ENCODE measurements at regions of chr2 and their contacts with region 1.

Region 1: DNA sequence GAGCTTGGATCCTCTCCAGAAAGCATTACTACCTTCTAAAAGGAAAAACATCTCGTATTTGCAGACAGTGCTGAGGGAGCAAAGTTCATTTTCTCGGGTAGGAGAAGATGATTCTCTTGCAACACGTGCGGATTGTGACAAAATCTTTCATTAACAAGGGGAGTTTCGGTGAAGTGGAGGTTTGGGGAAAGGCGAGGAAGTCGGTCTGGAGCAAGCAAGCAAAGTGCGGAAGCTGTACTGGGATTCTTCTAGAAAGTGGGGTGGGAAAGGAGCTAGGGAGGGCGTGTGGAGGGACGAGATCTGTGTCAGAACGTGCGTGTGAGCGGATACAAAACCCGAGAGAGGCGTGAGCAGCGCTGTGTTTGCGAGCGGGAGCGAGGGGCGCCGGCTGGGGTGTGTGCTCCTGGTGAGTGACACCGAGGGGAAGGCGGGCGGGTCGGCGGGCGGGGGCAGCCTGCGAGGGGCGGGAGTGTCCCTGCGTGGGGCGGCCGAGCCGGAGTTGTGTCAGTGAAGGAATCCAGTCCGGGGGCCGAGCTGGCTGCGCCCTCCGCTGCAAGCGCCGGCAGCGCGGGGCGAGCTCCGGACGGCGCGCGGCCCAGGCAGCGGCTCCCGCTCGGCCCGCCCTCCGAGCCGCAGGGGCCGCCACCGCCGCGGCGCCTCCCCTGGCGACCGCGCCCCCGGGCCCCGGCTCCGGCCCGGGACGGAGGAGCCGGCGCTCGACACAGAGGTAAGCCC is at the start of gene SPATS2L:
- DNase-seq: peak; percentile 85
- ATAC-seq: peak; percentile 83 to 89
- total RNA-seq, gene SPATS2L: 95.7 to 117 TPM

Region 2: GRCh38 chr2:199985625-199986207 is 320.6 kb before region 1 on chr2:
- intact Hi-C with region 1: loop called in 1 of 2 experiments (anchors 5 kb)
- DNase-seq: peak; percentile 46
- ATAC-seq: peak; percentile 69 to 70

Region 3: DNA sequence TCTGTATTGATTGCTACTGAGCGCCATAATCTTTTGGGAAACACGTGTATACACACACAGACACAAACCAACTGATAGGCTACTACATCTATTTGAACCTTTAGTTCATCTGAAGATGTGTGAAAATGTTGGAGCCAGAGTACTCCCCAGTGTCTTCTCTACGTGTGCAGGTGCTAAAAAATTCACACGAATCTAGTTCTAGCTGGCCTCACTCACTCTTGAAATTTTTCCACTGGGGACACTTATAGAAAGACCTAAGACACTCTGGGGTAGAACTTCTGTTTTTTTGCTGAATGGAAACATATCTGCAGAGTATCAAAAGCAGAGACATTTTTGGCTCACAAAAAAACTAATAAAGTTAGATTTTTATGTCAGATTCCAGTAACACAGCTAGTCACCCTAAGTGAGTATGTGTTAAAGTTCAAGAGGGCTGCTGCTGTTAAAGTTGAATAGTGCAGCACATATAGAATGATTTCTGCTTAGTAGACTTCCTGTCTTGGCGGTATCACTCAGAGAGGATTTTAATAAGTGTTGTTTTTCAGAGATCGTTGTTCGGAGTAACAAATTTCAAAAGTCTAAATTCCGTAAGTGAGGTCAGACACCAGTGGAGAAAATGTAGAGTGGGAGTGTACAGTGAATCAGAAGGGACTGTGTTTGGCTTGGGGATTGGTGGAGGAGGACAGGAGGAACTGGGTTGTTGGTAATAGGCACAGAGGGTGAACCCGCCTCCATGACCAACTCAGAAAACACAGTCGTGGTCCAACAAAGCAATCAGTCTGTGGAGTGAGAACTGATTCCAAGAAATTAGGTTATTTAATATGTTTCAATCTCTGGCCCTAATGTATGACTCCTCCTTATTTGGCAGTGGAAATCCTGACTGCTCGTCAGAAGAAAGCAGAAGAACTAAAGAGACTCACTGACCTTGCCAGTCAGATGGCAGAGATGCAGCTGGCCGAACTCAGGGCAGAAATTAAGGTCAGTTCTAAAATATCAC is 160.4 kb after region 1 on chr2:
- intact Hi-C with region 1: loop called in 1 of 2 experiments (anchors 10 kb)
- DNase-seq: peak; percentile 42
- ATAC-seq: peak; percentile 94 to 96

Measured in left cardiac atrium (tissue), 4 donors.